ENCODE measurements at regions of chr10 and their contacts with region 1.

Region 1: GRCh38 chr10:59625721-59626522 is 83.7 kb downstream of the SLC16A9 start:
- DNase-seq: peak; percentile 94
- H3K4me3 ChIP-seq: no peak overlapping the region
- H3K27ac ChIP-seq: no peak overlapping the region
- H3K4me1 ChIP-seq: no peaks in the 10 kb centered on the region
- H3K27me3 ChIP-seq: no peaks in the 10 kb centered on the region
- CTCF ChIP-seq: peak; percentile 93

Region 2: GRCh38 chr10:58531084-58531695 is 1094.7 kb before region 1 on chr10:
- CTCF ChIA-PET with region 1: interaction called, 4 read pairs
- POLR2A ChIA-PET with region 1: no interaction called
- intact Hi-C with region 1: loop called (anchors 5 kb)
- DNase-seq: peak; percentile 78
- H3K4me3 ChIP-seq: no peak overlapping the region
- H3K27ac ChIP-seq: no peak overlapping the region
- H3K4me1 ChIP-seq: no peaks in the 10 kb centered on the region
- H3K27me3 ChIP-seq: peaks cover 4% of the 10 kb centered on the region
- CTCF ChIP-seq: peak; percentile 79

Region 3: DNA sequence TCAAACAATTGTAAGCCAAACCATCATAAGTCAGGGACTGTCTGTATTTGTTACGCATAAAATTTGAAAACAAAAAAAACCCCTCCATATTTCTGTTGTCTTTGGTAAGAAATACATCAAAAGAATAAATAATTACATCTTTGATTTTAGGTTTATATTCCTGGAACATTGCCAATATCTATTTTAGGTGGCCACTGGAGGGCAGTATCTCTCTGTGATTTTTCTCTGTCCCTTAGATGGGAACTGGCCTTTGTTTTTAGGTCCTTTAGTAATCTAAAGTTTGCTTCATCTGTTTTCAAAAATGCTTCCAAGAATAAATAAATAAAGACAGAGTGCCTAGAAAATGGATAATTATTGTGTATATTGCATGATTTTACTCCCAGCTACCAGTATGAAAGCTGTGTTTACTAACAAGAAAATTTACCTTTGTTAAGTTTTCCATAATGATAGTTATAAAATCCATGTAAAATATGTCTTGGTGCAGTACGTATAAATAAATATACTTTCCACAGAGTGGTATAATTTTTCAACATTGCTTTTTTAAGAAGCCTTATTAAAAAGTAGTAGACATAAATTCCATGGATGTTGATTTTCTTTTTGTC is 385.2 kb before region 1 on chr10:
- CTCF ChIA-PET with region 1: interaction called, 4 read pairs
- POLR2A ChIA-PET with region 1: no interaction called
- intact Hi-C with region 1: loop called (anchors 1 kb)
- DNase-seq: peak; percentile 66
- H3K4me3 ChIP-seq: no peak overlapping the region
- H3K27ac ChIP-seq: no peak overlapping the region
- H3K4me1 ChIP-seq: peaks cover 29% of the 10 kb centered on the region
- H3K27me3 ChIP-seq: no peaks in the 10 kb centered on the region
- CTCF ChIP-seq: peak; percentile 72

Region 4: DNA sequence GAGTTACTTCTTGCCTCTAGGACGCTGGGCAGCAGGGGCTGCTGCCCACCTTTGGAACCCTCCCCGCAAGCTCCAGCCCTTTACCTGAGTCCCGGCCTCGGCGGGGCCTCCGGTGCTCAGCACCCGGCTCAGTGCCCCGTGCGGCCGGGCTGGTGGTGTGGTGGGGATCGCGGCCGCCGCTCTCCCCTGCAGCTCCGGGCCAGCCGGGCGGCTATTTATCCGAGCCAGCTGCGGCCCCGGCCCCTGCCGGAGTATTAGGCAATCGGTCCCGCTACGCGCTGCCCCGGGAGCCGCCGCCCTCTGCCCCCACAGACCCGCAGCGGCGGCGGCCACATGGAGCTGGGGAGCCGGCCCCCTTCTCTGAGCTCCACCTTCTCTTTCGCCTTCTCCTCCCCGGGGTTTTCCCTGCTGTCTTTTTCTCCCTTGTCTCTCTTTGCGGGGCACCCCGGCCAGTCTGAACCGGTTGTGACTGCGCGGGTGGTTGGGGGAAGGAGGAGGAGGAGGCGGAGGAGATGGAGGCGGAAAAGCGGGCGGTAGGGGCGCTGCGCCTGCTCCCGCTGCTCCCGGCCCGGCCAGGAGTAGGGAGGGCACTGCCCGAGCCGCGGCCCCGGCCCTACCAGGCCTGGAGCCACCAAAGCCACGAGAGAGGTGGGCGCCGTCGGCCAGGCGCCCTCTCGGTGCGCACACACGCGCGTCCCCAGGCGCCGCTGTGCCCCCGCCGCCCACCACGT is 83.6 kb after region 1 on chr10 and contains the start of gene SLC16A9:
- CTCF ChIA-PET with region 1: interaction called, 4 read pairs
- POLR2A ChIA-PET with region 1: no interaction called
- intact Hi-C with region 1: loop called (anchors 5 kb)
- DNase-seq: peak; percentile 74
- H3K4me3 ChIP-seq: peak within 1 kb of the TSS; percentile 69
- H3K27ac ChIP-seq: peak within 1 kb of the TSS; percentile 60
- H3K4me1 ChIP-seq: peaks cover 5% of the 10 kb centered on the region
- H3K27me3 ChIP-seq: peaks cover 57% of the 10 kb centered on the region
- CTCF ChIP-seq: peak; percentile 46
- total RNA-seq, gene SLC16A9: 2.9 and 3.0 TPM in 2 replicates

Region 5: GRCh38 chr10:59830601-59831259 is 204.8 kb after region 1 on chr10:
- CTCF ChIA-PET with region 1: interaction called, 11 read pairs
- POLR2A ChIA-PET with region 1: no interaction called
- intact Hi-C with region 1: loop called (anchors 1 kb)
- DNase-seq: peak; percentile 71
- H3K4me3 ChIP-seq: no peak overlapping the region
- H3K27ac ChIP-seq: no peak overlapping the region
- H3K4me1 ChIP-seq: no peaks in the 10 kb centered on the region
- H3K27me3 ChIP-seq: no peaks in the 10 kb centered on the region
- CTCF ChIP-seq: peak; percentile 80

Region 6: DNA sequence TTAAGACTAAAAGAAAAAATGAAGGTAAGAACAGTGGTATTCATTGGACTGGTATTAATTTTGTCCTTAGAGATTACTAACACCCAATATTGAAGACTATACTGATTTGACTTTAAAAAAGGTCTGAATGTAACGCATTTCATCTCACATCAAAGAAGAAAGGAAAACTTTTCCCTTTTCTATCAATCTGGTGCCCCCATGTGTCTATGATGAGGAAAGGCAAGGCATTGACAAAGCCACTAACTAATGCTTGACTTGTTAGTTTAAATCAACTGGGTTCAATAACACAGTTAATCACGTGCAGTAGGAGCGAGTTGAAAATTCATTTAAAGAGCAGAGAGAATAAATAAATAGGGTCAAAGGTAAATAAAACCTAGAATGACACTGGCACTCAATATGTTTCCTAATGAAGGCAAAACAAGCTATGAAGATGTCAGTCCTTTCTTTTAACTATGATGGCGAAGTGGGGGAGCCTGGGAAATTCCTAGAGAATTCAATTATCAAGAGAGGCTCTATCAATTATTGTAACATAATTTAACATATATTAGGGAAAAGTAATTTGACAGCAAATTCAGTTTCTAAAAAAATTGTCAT is 582.9 kb after region 1 on chr10:
- CTCF ChIA-PET with region 1: no interaction called
- POLR2A ChIA-PET with region 1: no interaction called
- intact Hi-C with region 1: loop called (anchors 5 kb)
- DNase-seq: peak; percentile 60
- H3K4me3 ChIP-seq: no peak overlapping the region
- H3K27ac ChIP-seq: no peak overlapping the region
- H3K4me1 ChIP-seq: no peaks in the 10 kb centered on the region
- H3K27me3 ChIP-seq: no peaks in the 10 kb centered on the region
- CTCF ChIP-seq: peak; percentile 80